CD8-positive, alpha-beta T cell (primary cell): ENCODE measurements at regions of chr1 and their contacts with region 1.

Region 1: DNA sequence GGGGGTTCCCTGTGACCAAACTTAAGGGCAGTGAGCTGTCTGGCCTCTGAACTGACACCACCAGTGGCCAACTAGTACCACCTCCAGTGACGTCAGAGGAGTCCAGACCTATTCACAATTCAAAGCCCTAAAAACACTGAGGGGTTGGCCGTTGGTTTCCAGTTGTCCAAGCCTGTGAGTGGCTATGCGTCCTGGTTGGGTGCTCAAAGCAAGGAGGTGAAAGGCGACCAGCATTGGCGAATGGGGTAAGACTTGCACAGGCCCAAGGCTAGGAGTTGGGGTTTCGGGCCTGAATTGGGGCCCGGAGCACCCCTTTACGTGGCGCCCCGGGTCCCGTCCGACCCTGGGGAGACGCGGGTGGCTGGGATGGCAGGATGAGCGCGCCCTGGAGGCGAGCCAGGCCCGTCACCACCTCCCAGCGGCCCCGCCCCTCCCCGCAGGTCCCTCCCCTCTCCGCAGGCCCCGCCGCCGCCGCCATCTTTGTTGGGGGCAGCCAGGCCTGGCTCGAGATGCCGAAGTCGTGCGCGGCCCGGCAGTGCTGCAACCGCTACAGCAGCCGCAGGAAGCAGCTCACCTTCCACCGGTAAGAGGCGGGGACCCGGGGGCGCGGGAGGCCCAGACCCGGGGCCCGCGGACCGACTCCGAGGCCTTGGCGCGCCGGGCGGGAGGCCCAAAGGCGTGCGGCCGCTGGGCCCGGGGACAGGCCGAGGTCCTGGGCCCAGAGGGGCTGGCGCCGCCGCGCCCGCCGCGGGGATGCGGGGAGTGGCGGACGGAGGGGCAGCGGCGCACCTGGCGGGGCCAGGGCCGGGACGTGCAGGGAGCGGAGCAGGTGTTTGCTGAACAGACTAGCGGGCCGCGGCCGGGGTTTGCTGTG is at the start of gene THAP3:
- DNase-seq: peak; percentile 78 to 94 (median 90)
- ATAC-seq: peak; percentile 99
- H3K4me3 ChIP-seq: peak within 1 kb of the TSS; percentile 61 to 69
- H3K4me3 Mint-ChIP-seq: peak within 1 kb of the TSS; percentile 91
- H3K27ac ChIP-seq: peak within 1 kb of the TSS; percentile 47 to 55
- H3K27ac Mint-ChIP-seq: peak within 1 kb of the TSS; percentile 88
- H3K4me1 ChIP-seq: peaks cover 18% of the 10 kb centered on the region
- H3K4me1 Mint-ChIP-seq: peaks cover 30% of the 10 kb centered on the region
- H3K27me3 ChIP-seq: no peaks in the 10 kb centered on the region
- H3K27me3 Mint-ChIP-seq: no peaks in the 10 kb centered on the region
- CTCF ChIP-seq: peak; percentile 25
- total RNA-seq, gene THAP3: 13.9 to 14.4 TPM

Region 2: GRCh38 chr1:6579374-6580118 is 45.4 kb before region 1 on chr1 and contains the start of gene ZBTB48:
- CTCF ChIA-PET with region 1: no interaction called
- POLR2A ChIA-PET with region 1: interaction called, 3 read pairs
- intact Hi-C with region 1: loop called (anchors 1 kb)
- DNase-seq: peak; percentile 91 to 98 (median 97)
- ATAC-seq: peak; percentile 98
- H3K4me3 ChIP-seq: peak within 1 kb of the TSS; percentile 90 to 97
- H3K4me3 Mint-ChIP-seq: peak within 1 kb of the TSS; percentile 97
- H3K27ac ChIP-seq: peak within 1 kb of the TSS; percentile 94
- H3K27ac Mint-ChIP-seq: peak within 1 kb of the TSS; percentile 98
- H3K4me1 ChIP-seq: peaks cover 31% of the 10 kb centered on the region
- H3K4me1 Mint-ChIP-seq: peaks cover 38% of the 10 kb centered on the region
- H3K27me3 ChIP-seq: no peaks in the 10 kb centered on the region
- H3K27me3 Mint-ChIP-seq: no peaks in the 10 kb centered on the region
- CTCF ChIP-seq: no peak
- total RNA-seq, gene ZBTB48: 31.9 to 35.0 TPM

Region 3: DNA sequence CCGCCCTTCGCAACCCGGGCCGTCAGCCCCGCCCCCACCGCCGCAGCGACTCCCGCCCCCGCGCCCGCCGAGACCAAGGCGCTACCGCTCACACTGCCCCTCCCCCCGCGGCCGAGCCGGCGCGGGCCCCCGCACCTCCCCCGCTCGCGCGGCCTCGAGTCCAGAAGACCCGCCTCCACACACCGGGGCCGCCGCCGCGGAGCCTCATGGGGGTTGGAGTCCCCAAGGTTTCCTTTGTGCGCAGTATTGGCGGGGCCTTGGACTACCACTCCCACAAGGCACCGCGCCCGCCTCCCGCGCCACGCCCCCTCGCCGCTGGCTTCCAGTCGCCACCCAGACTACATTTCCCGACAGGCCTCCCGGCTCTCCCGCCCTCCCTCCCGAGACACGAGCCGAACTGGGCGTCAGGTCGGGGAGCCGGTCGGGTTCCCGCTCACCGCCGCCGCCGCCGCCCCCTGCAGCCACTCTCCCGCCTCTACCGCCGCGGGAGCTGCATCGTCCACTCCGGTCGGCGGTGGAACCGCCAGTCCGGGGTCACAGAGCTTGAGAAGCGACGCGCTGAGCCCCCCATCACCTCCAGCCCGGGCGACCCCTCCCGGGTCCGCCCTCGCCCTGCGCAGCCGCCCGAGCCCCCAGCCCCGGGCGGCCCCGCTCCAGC is 11.5 kb before region 1 on chr1 and contains the start of gene PHF13:
- CTCF ChIA-PET with region 1: no interaction called
- POLR2A ChIA-PET with region 1: interaction called, 3 read pairs
- intact Hi-C with region 1: loop called (anchors 1 kb)
- DNase-seq: peak; percentile 98 to 100 (median 99)
- ATAC-seq: peak; percentile 93
- H3K4me3 ChIP-seq: peak within 1 kb of the TSS; percentile 70 to 72
- H3K4me3 Mint-ChIP-seq: peak within 1 kb of the TSS; percentile 90
- H3K27ac ChIP-seq: peak within 1 kb of the TSS; percentile 9 to 55
- H3K27ac Mint-ChIP-seq: peak within 1 kb of the TSS; percentile 86
- H3K4me1 ChIP-seq: peaks cover 18% of the 10 kb centered on the region
- H3K4me1 Mint-ChIP-seq: peaks cover 31% of the 10 kb centered on the region
- H3K27me3 ChIP-seq: no peaks in the 10 kb centered on the region
- H3K27me3 Mint-ChIP-seq: no peaks in the 10 kb centered on the region
- CTCF ChIP-seq: no peak
- total RNA-seq, gene PHF13: 3.3 to 3.5 TPM

Region 4: GRCh38 chr1:6701437-6702153 is 76.6 kb after region 1 on chr1 and contains the start of gene DNAJC11:
- CTCF ChIA-PET with region 1: no interaction called
- POLR2A ChIA-PET with region 1: no interaction called
- intact Hi-C with region 1: loop called (anchors 1 to 5 kb)
- DNase-seq: peak; percentile 82 to 96 (median 89)
- ATAC-seq: peak; percentile 96
- H3K4me3 ChIP-seq: peak within 1 kb of the TSS; percentile 79 to 87
- H3K4me3 Mint-ChIP-seq: peak within 1 kb of the TSS; percentile 94
- H3K27ac ChIP-seq: peak within 1 kb of the TSS; percentile 68 to 70
- H3K27ac Mint-ChIP-seq: peak within 1 kb of the TSS; percentile 95
- H3K4me1 ChIP-seq: peaks cover 11% of the 10 kb centered on the region
- H3K4me1 Mint-ChIP-seq: peaks cover 25% of the 10 kb centered on the region
- H3K27me3 ChIP-seq: no peaks in the 10 kb centered on the region
- H3K27me3 Mint-ChIP-seq: no peaks in the 10 kb centered on the region
- CTCF ChIP-seq: peak; percentile 89
- total RNA-seq, gene DNAJC11: 23.3 to 24.4 TPM